ENCODE measurements at regions of chr21 and their contacts with region 1.

Region 1: GRCh38 chr21:43639470-43640178 is 19.7 kb downstream of the HSF2BP start:
- DNase-seq: no peak
- H3K4me3 Mint-ChIP-seq: no peak overlapping the region
- H3K27ac Mint-ChIP-seq: peak overlapping the region; percentile 19
- H3K4me1 Mint-ChIP-seq: peaks cover 7% of the 10 kb centered on the region
- H3K27me3 Mint-ChIP-seq: no peaks in the 10 kb centered on the region
- CTCF ChIP-seq: no peak

Region 2: GRCh38 chr21:43600642-43601402 is 38.8 kb before region 1 on chr21:
- CTCF ChIA-PET with region 1: no interaction called
- intact Hi-C with region 1: loop called (anchors 5 kb)
- DNase-seq: peak; percentile 21
- H3K4me3 Mint-ChIP-seq: no peak overlapping the region
- H3K27ac Mint-ChIP-seq: no peak overlapping the region
- H3K4me1 Mint-ChIP-seq: peaks cover 22% of the 10 kb centered on the region
- H3K27me3 Mint-ChIP-seq: no peaks in the 10 kb centered on the region
- CTCF ChIP-seq: no peak

Region 3: GRCh38 chr21:43767984-43768867 is 128.6 kb after region 1 on chr21:
- CTCF ChIA-PET with region 1: no interaction called
- intact Hi-C with region 1: no loop called
- DNase-seq: peak; percentile 74
- H3K4me3 Mint-ChIP-seq: peak overlapping the region; percentile 54
- H3K27ac Mint-ChIP-seq: peak overlapping the region; percentile 99
- H3K4me1 Mint-ChIP-seq: peaks cover 19% of the 10 kb centered on the region
- H3K27me3 Mint-ChIP-seq: no peaks in the 10 kb centered on the region
- CTCF ChIP-seq: no peak

Measured in Calu3 (cell line).